ENCODE measurements at regions of chr11 and their contacts with region 1.

Region 1: GRCh38 chr11:95337175-95337957 is 106.4 kb upstream of the SESN3 start:
- DNase-seq: peak; percentile 12 to 55 (median 39)
- ATAC-seq: peak; percentile 69
- H3K4me3 ChIP-seq: peak overlapping the region; percentile 36
- H3K4me3 Mint-ChIP-seq: no peak overlapping the region
- H3K27ac ChIP-seq: peak overlapping the region; percentile 59
- H3K27ac Mint-ChIP-seq: no peak overlapping the region
- H3K4me1 ChIP-seq: peaks cover 4 to 20% of the 10 kb centered on the region in 2 donors
- H3K4me1 Mint-ChIP-seq: peaks cover 0 to 12% (median under 1%) of the 10 kb centered on the region in 7 donors
- H3K27me3 ChIP-seq: no peaks in the 10 kb centered on the region
- H3K27me3 Mint-ChIP-seq: no peaks in the 10 kb centered on the region

Region 2: GRCh38 chr11:95254131-95254704 is 83.1 kb before region 1 on chr11:
- CTCF ChIA-PET with region 1: no interaction called
- POLR2A ChIA-PET with region 1: interaction called, 4 read pairs
- intact Hi-C with region 1: loop called (anchors 5 kb)
- DNase-seq: peak; percentile 45 to 91 (median 84)
- ATAC-seq: peak; percentile 98
- H3K4me3 ChIP-seq: peak overlapping the region; percentile 52
- H3K4me3 Mint-ChIP-seq: peak overlapping the region; percentile 74 to 98 (median 89)
- H3K27ac ChIP-seq: peak overlapping the region; percentile 71
- H3K27ac Mint-ChIP-seq: peak overlapping the region; percentile 81 to 98 (median 90)
- H3K4me1 ChIP-seq: peaks cover 13 to 31% of the 10 kb centered on the region in 2 donors
- H3K4me1 Mint-ChIP-seq: peaks cover 20 to 59% (median 53%) of the 10 kb centered on the region in 7 donors
- H3K27me3 ChIP-seq: no peaks in the 10 kb centered on the region
- H3K27me3 Mint-ChIP-seq: no peaks in the 10 kb centered on the region

Region 3: DNA sequence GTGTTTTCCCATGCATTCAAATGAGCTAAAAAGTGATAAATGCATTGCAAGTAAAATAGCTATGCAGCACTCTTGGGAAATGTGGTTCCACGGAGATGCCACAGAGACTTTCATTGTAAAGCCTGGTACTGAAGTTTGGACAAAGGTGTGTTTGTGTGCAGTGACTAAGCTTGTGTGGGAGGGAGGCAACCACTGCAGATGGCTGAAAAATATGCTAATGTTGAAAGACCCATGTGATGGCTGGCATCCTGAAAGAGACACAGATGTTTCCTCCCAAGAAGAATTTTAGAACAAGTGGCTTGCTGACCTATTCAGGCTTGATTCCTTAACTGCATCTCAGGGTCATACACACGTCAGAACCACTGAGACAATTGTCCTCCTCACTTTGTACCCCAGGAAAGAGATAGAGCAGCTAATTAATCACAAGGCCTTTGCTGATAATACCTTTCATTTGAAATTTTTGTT is 378.4 kb after region 1 on chr11:
- CTCF ChIA-PET with region 1: no interaction called
- POLR2A ChIA-PET with region 1: no interaction called
- intact Hi-C with region 1: loop called in 1 of 2 experiments (anchors 1 kb)
- DNase-seq: peak in 1 of 9 donors; percentile 60
- ATAC-seq: peak; percentile 63
- H3K4me3 ChIP-seq: no peak overlapping the region
- H3K4me3 Mint-ChIP-seq: peak overlapping the region in 2 of 10 donors; percentile 1 to 56
- H3K27ac ChIP-seq: no peak overlapping the region
- H3K27ac Mint-ChIP-seq: peak overlapping the region in 6 of 9 donors; percentile 8 to 72 (median 26)
- H3K4me1 ChIP-seq: peaks cover 5 to 6% of the 10 kb centered on the region in 2 donors
- H3K4me1 Mint-ChIP-seq: peaks cover 11 to 45% (median 31%) of the 10 kb centered on the region in 7 donors
- H3K27me3 ChIP-seq: no peaks in the 10 kb centered on the region
- H3K27me3 Mint-ChIP-seq: peaks cover 0 to 7% (median 3%) of the 10 kb centered on the region in 5 donors

Region 4: DNA sequence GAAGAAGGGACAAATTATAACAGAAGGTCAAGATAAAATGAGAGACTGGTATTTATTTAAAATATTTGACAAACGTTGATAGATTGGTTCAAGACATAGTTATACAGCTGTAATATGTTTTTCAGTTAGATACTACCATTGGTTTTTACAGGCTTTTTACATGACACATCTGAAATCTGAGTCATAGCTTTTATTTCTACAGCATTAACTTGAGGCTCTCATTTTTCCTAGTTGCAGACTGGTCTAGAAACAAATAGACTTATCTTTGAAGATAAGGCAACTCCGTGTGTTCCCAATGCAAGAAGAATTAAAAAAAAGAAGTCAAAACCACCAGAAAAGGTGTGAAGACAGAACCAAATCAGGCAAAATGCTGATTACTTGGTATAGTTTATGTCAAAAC is 484.3 kb after region 1 on chr11:
- CTCF ChIA-PET with region 1: interaction called, 11 read pairs
- POLR2A ChIA-PET with region 1: no interaction called
- intact Hi-C with region 1: no loop called
- DNase-seq: no peak
- ATAC-seq: no peak
- H3K4me3 ChIP-seq: no peak overlapping the region
- H3K4me3 Mint-ChIP-seq: no peak overlapping the region
- H3K27ac ChIP-seq: no peak overlapping the region
- H3K27ac Mint-ChIP-seq: peak overlapping the region in 1 of 9 donors; percentile 75
- H3K4me1 ChIP-seq: no peaks in the 10 kb centered on the region
- H3K4me1 Mint-ChIP-seq: no peaks in the 10 kb centered on the region
- H3K27me3 ChIP-seq: no peaks in the 10 kb centered on the region
- H3K27me3 Mint-ChIP-seq: no peaks in the 10 kb centered on the region